PC-9 (cell line): ENCODE measurements at regions of chr9 and their contacts with region 1.

Region 1: GRCh38 chr9:107489687-107490605 is at the start of gene KLF4:
- DNase-seq: peak; percentile 78 to 92
- H3K4me3 ChIP-seq: peak within 1 kb of the TSS; percentile 100
- H3K27ac ChIP-seq: peak within 1 kb of the TSS; percentile 85
- H3K4me1 ChIP-seq: peaks cover 29% of the 10 kb centered on the region
- H3K27me3 ChIP-seq: no peaks in the 10 kb centered on the region
- CTCF ChIP-seq: no peak
- total RNA-seq, gene KLF4: 48.5 and 49.0 TPM in 2 replicates

Region 2: DNA sequence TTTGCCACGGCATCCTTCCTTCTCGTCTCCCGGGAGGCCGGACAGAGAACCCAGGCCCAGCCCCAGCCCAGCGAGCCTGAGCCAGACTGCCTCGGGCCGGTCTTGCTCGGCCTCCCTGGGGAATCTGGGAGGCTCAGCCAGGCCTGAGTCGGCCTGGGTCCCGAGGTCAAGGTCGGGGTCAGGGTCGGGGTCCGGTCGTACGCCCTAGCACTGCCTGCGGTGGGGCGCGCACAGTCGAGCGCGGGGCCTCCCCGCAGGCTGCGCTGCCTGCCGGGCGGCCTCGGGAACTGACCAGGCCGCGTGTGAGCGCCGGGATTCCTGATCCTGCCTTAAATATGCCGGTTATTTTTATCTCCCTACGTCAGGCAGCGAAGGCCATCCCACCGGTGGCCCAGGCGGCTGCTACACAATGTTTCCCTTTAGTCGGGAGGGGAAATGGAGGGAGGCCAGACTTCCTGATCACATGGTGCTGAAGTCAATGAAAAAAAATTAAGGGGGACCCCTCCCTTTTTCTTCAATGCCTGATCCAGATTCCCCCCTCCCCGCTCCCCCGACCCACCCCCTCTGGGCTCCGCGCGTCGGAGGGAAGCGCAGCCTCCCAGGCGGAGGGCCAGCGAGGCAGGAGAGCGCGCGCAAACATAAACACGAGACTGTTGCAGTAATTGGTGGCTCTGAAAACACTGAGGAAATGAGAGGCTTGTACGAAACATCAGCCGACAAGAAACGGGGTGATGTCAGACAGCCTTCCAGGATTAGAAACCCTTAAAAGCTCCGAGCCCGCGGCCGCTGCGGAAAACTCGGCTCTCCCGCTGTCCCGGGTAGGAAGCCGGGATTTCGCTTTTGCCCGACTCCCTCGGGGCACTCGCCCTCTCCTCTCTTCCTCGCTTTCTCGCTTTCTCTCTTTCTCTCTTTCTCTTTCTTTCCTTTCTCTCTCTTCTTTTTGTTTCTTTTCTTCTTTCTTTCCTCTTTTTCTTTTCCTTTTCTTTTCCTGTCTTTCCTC is 147.8 kb after region 1 on chr9:
- CTCF ChIA-PET with region 1: no interaction called
- POLR2A ChIA-PET with region 1: interaction called, 9 read pairs
- intact Hi-C with region 1: loop called (anchors 2 kb)
- DNase-seq: peak in 1 of 2 experiments; percentile 44
- H3K4me3 ChIP-seq: no peak overlapping the region
- H3K27ac ChIP-seq: no peak overlapping the region
- H3K4me1 ChIP-seq: no peaks in the 10 kb centered on the region
- H3K27me3 ChIP-seq: no peaks in the 10 kb centered on the region
- CTCF ChIP-seq: no peak

Region 3: GRCh38 chr9:107755284-107755683 is 265.3 kb after region 1 on chr9:
- CTCF ChIA-PET with region 1: no interaction called
- POLR2A ChIA-PET with region 1: interaction called, 8 read pairs
- intact Hi-C with region 1: loop called (anchors 1 kb)
- DNase-seq: peak; percentile 85 to 99
- H3K4me3 ChIP-seq: 0 out of 2 replicates have a peak overlapping the region, but pooled peaks have one; percentile 20
- H3K27ac ChIP-seq: peak overlapping the region; percentile 99
- H3K4me1 ChIP-seq: peaks cover 60% of the 10 kb centered on the region
- H3K27me3 ChIP-seq: no peaks in the 10 kb centered on the region
- CTCF ChIP-seq: no peak

Region 4: GRCh38 chr9:108002371-108002956 is 512.5 kb after region 1 on chr9:
- CTCF ChIA-PET with region 1: no interaction called
- POLR2A ChIA-PET with region 1: interaction called, 4 read pairs
- intact Hi-C with region 1: loop called (anchors 1 kb)
- DNase-seq: no peak
- H3K4me3 ChIP-seq: no peak overlapping the region
- H3K27ac ChIP-seq: no peak overlapping the region
- H3K4me1 ChIP-seq: no peaks in the 10 kb centered on the region
- H3K27me3 ChIP-seq: no peaks in the 10 kb centered on the region
- CTCF ChIP-seq: no peak

Region 5: DNA sequence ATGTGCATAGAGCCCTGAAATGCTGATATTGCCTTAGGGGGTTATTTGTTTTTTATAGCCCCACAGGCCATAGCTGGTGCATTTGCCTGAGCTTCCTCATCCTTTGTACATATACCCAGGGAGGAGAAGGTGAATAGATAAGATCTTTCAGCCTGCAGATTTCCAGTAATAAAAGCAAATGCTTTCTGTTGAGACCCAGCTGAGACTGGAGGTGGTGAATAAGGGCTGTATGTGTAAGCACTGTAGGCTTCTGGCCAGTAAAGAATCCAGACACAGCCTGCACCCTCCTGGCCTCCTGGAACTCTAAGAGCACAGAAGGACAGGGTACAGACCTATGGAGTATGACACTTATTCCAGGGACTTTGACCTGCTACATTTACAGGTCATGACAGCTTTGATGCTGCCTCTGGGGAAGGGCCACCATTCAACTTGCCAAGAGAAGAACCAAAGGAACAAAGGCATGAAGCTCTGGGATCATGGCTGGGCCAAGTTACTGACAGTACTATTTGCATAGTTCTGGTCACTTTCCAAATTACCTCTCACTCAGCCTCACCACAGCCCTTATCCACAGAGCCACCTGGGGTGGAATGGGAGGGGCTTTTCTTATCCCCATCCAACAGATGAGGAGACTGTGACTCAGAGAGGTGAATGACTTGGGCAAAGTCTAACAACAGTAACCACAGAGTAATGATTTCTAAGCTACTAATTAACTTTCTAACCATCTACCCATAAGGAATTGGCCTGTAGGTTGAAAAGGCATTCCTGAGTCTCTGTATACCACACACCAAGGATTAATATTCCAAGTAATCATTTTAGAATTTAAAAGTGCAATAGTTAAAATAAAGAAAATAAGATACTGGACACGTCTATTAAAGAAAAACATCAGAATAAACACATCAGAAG is 604.1 kb after region 1 on chr9:
- CTCF ChIA-PET with region 1: no interaction called
- POLR2A ChIA-PET with region 1: no interaction called
- intact Hi-C with region 1: loop called (anchors 5 kb)
- DNase-seq: peak; percentile 60 to 79
- H3K4me3 ChIP-seq: no peak overlapping the region
- H3K27ac ChIP-seq: peak overlapping the region; percentile 85
- H3K4me1 ChIP-seq: peaks cover 30% of the 10 kb centered on the region
- H3K27me3 ChIP-seq: no peaks in the 10 kb centered on the region
- CTCF ChIP-seq: no peak

Region 6: GRCh38 chr9:108478431-108478837 is 988.5 kb after region 1 on chr9:
- CTCF ChIA-PET with region 1: no interaction called
- POLR2A ChIA-PET with region 1: no interaction called
- intact Hi-C with region 1: loop called (anchors 10 kb)
- DNase-seq: peak; percentile 57 to 93
- H3K4me3 ChIP-seq: no peak overlapping the region
- H3K27ac ChIP-seq: peak overlapping the region; percentile 87
- H3K4me1 ChIP-seq: peaks cover 48% of the 10 kb centered on the region
- H3K27me3 ChIP-seq: no peaks in the 10 kb centered on the region
- CTCF ChIP-seq: no peak